K562 (cell line): ENCODE measurements at regions of chr3 and their contacts with region 1.

Region 1: GRCh38 chr3:4644951-4645350 is 151.8 kb downstream of the ITPR1 start:
- DNase-seq: no peak
- ATAC-seq: no peak
- H3K4me3 ChIP-seq: no peak overlapping the region
- H3K27ac ChIP-seq: no peak overlapping the region
- H3K4me1 ChIP-seq: peaks cover 3 to 17% of the 10 kb centered on the region in 2 experiments; a peak in 3 of 5 replicates
- H3K27me3 ChIP-seq: no peaks in the 10 kb centered on the region
- CTCF ChIP-seq: no peak
- EP300 ChIP-seq: no peak
- POLR2A ChIP-seq: no peak
- RAD21 ChIP-seq: no peak

Region 2: GRCh38 chr3:4597204-4597985 is 47.6 kb before region 1 on chr3:
- CTCF ChIA-PET with region 1: no interaction called
- POLR2A ChIA-PET with region 1: no interaction called
- in situ Hi-C with region 1: no loop called
- intact Hi-C with region 1: loop called (anchors 5 kb)
- DNase-seq: no peak
- ATAC-seq: no peak
- H3K4me3 ChIP-seq: no peak overlapping the region
- H3K27ac ChIP-seq: no peak overlapping the region
- H3K4me1 ChIP-seq: peaks cover 0 to 6% of the 10 kb centered on the region in 2 experiments; a peak in 2 of 5 replicates
- H3K27me3 ChIP-seq: no peaks in the 10 kb centered on the region
- CTCF ChIP-seq: no peak
- EP300 ChIP-seq: no peak
- POLR2A ChIP-seq: no peak
- RAD21 ChIP-seq: no peak

Region 3: DNA sequence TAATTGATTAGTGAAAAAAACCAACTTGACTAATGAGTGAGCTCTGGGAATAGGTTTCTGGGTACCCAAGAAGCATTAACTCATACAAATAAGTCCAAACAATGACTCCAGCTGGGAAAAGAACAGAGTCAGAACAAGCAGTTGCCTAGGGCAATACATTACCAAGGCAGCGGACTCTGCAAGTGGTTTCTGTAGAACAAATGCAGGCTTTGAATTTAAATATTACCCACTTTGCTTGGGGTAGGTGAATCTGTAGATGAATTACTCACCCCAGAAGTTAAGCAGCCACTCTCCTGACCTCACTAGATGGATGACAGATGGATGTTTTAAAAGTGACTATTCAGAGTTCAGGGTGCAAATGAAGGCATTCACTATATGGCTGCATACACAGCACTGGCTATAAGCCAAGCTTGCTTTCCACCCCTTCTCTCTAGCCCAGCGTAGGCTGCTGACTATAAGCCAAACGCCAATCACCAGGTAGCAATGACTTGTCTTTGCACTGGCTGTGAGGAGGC is 261.2 kb after region 1 on chr3:
- CTCF ChIA-PET with region 1: no interaction called
- POLR2A ChIA-PET with region 1: no interaction called
- in situ Hi-C with region 1: no loop called
- intact Hi-C with region 1: no loop called
- DNase-seq: peak in 2 of 4 experiments; percentile 50 to 70
- ATAC-seq: peak; percentile 71
- H3K4me3 ChIP-seq: no peak overlapping the region
- H3K27ac ChIP-seq: no peak overlapping the region
- H3K4me1 ChIP-seq: peaks cover 0 to 20% of the 10 kb centered on the region in 2 experiments; a peak in 4 of 5 replicates
- H3K27me3 ChIP-seq: no peaks in the 10 kb centered on the region
- CTCF ChIP-seq: no peak
- EP300 ChIP-seq: no peak
- POLR2A ChIP-seq: no peak
- RAD21 ChIP-seq: no peak